Endothelial cell of umbilical vein (primary cell): ENCODE measurements at regions of chr3 and their contacts with region 1.

Region 1: GRCh38 chr3:156044634-156044975 is 75.8 kb upstream of the KCNAB1 start:
- DNase-seq: no peak
- H3K4me3 ChIP-seq: no peak overlapping the region
- H3K27ac ChIP-seq: no peak overlapping the region
- H3K4me1 ChIP-seq: no peaks in the 10 kb centered on the region
- H3K27me3 ChIP-seq: no peaks in the 10 kb centered on the region
- CTCF ChIP-seq: no peak
- POLR2A ChIP-seq: no peak

Region 2: GRCh38 chr3:155996882-155997281 is 47.7 kb before region 1 on chr3:
- CTCF ChIA-PET with region 1: no interaction called
- POLR2A ChIA-PET with region 1: no interaction called
- dilution Hi-C with region 1: no loop called
- intact Hi-C with region 1: no loop called
- DNase-seq: no peak
- H3K4me3 ChIP-seq: no peak overlapping the region
- H3K27ac ChIP-seq: no peak overlapping the region
- H3K4me1 ChIP-seq: no peaks in the 10 kb centered on the region
- H3K27me3 ChIP-seq: peaks cover 0 to 2% of the 10 kb centered on the region in 2 experiments
- CTCF ChIP-seq: no peak
- POLR2A ChIP-seq: no peak

Region 3: GRCh38 chr3:156059950-156060501 is 15.4 kb after region 1 on chr3:
- CTCF ChIA-PET with region 1: interaction called, 22 read pairs
- POLR2A ChIA-PET with region 1: no interaction called
- dilution Hi-C with region 1: no loop called
- intact Hi-C with region 1: no loop called
- DNase-seq: no peak
- H3K4me3 ChIP-seq: no peak overlapping the region
- H3K27ac ChIP-seq: no peak overlapping the region
- H3K4me1 ChIP-seq: no peaks in the 10 kb centered on the region
- H3K27me3 ChIP-seq: peaks cover 5 to 10% of the 10 kb centered on the region in 2 experiments
- CTCF ChIP-seq: no peak
- POLR2A ChIP-seq: no peak